Endothelial cell of umbilical vein (primary cell): ENCODE measurements at regions of chr1 and their contacts with region 1.

Region 1: GRCh38 chr1:161139765-161140164 is 7.3 kb upstream of the DEDD start:
- DNase-seq: peak; percentile 75
- H3K4me3 ChIP-seq: no peak overlapping the region
- H3K27ac ChIP-seq: no peak overlapping the region
- H3K4me1 ChIP-seq: no peaks in the 10 kb centered on the region
- H3K27me3 ChIP-seq: no peaks in the 10 kb centered on the region
- CTCF ChIP-seq: peak; percentile 18 to 47
- POLR2A ChIP-seq: no peak

Region 2: DNA sequence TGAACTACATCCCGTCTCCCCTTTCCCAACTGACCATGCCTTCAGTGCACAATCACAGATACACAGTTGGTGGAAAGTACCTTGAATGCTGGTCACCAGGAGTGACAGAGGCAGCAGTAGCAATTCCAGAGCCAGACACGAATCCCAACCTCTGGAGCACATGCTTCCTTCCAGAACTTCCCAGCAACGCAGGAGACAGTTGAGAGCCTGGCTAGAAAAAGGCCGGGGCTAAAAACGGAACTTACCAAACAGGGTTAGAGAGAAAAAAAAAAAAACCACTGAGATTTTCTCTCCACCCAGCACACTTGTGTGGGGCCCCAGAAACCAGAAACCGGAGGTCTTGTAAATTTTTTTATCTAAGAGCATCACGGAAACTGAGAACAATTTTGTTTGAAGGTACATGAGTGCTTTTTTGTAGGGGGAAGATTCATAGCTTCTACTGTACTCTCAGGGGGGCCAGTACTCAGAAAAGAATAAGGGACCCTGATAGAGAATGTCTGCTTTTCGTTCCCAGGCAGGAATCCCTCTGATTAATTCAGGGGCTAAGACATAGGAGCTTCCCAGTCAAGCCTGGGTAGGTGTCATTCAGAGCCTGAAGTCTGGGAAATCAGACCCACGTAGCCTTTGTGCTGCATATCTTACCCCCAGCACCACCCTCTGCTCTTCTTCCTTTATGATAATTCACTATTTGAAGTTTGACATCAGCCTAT is 428.0 kb before region 1 on chr1 and contains the start of gene CD48:
- CTCF ChIA-PET with region 1: no interaction called
- POLR2A ChIA-PET with region 1: no interaction called
- dilution Hi-C with region 1: no loop called
- intact Hi-C with region 1: no loop called
- DNase-seq: no peak
- H3K4me3 ChIP-seq: no peak within 1 kb of the TSS
- H3K27ac ChIP-seq: no peak within 1 kb of the TSS
- H3K4me1 ChIP-seq: no peaks in the 10 kb centered on the region
- H3K27me3 ChIP-seq: peaks cover 6 to 9% of the 10 kb centered on the region in 2 experiments
- CTCF ChIP-seq: no peak
- POLR2A ChIP-seq: no peak
- total RNA-seq, gene CD48: not detected in 2 replicates

Region 3: GRCh38 chr1:160726498-160727315 is 413.1 kb before region 1 on chr1:
- CTCF ChIA-PET with region 1: interaction called, 3 read pairs
- POLR2A ChIA-PET with region 1: no interaction called
- dilution Hi-C with region 1: no loop called
- intact Hi-C with region 1: loop called (anchors 2 kb)
- DNase-seq: peak; percentile 68
- H3K4me3 ChIP-seq: no peak overlapping the region
- H3K27ac ChIP-seq: no peak overlapping the region
- H3K4me1 ChIP-seq: no peaks in the 10 kb centered on the region
- H3K27me3 ChIP-seq: no peaks in the 10 kb centered on the region
- CTCF ChIP-seq: peak; percentile 76 to 77
- POLR2A ChIP-seq: no peak

Region 4: GRCh38 chr1:160837558-160838205 is 302.1 kb before region 1 on chr1:
- CTCF ChIA-PET with region 1: interaction called, 41 read pairs
- POLR2A ChIA-PET with region 1: no interaction called
- dilution Hi-C with region 1: no loop called
- intact Hi-C with region 1: loop called (anchors 1 kb)
- DNase-seq: no peak
- H3K4me3 ChIP-seq: no peak overlapping the region
- H3K27ac ChIP-seq: no peak overlapping the region
- H3K4me1 ChIP-seq: no peaks in the 10 kb centered on the region
- H3K27me3 ChIP-seq: no peaks in the 10 kb centered on the region
- CTCF ChIP-seq: no peak
- POLR2A ChIP-seq: no peak

Region 5: GRCh38 chr1:161238039-161238473 is 98.3 kb after region 1 on chr1 and contains the start of gene NR1I3:
- CTCF ChIA-PET with region 1: no interaction called
- POLR2A ChIA-PET with region 1: no interaction called
- dilution Hi-C with region 1: no loop called
- intact Hi-C with region 1: no loop called
- DNase-seq: no peak
- H3K4me3 ChIP-seq: no peak within 1 kb of the TSS
- H3K27ac ChIP-seq: no peak within 1 kb of the TSS
- H3K4me1 ChIP-seq: no peaks in the 10 kb centered on the region
- H3K27me3 ChIP-seq: peaks cover 3 to 6% of the 10 kb centered on the region in 2 experiments
- CTCF ChIP-seq: no peak
- POLR2A ChIP-seq: no peak
- total RNA-seq, gene NR1I3: not detected in 2 replicates

Region 6: DNA sequence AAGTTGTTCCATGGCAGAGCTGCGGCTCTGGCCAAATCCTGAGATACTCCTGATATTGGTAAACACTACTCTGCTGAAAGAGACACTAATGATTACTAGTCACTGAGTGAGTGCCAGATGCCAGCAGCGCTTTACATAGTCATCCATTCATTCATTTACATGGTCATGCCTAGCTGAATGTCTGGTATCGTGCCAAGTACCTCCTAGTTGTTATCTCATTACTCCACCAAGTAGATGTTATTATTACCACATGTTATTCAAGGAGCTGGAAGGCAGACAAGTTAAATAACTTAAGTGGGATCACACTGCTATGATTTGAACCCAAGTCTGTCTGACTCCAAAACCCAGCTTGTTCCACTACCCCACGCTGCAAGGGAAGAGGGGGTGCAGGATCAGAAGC is 879.2 kb after region 1 on chr1:
- CTCF ChIA-PET with region 1: no interaction called
- POLR2A ChIA-PET with region 1: no interaction called
- dilution Hi-C with region 1: no loop called
- intact Hi-C with region 1: no loop called
- DNase-seq: peak; percentile 87
- H3K4me3 ChIP-seq: no peak overlapping the region
- H3K27ac ChIP-seq: no peak overlapping the region
- H3K4me1 ChIP-seq: peaks cover 4% of the 10 kb centered on the region
- H3K27me3 ChIP-seq: peaks cover 5 to 12% of the 10 kb centered on the region in 2 experiments
- CTCF ChIP-seq: no peak
- POLR2A ChIP-seq: no peak